ENCODE measurements at regions of chr10 and their contacts with region 1.

Region 1: GRCh38 chr10:105063796-105064195 is 422.7 kb downstream of the SORCS3 start:
- DNase-seq: no peak
- ATAC-seq: peak; percentile 83
- H3K4me3 ChIP-seq: no peak overlapping the region
- H3K27ac ChIP-seq: no peak overlapping the region
- H3K4me1 ChIP-seq: no peaks in the 10 kb centered on the region
- H3K27me3 ChIP-seq: no peaks in the 10 kb centered on the region
- CTCF ChIP-seq: peak; percentile 48 to 55 (median 51); a peak in 5 of 6 replicates
- EP300 ChIP-seq: no peak
- POLR2A ChIP-seq: no peak
- RAD21 ChIP-seq: peak; percentile 54

Region 2: GRCh38 chr10:105128111-105128510 is 64.3 kb after region 1 on chr10:
- CTCF ChIA-PET with region 1: no interaction called
- POLR2A ChIA-PET with region 1: no interaction called
- RAD21 ChIA-PET with region 1: no interaction called
- SMC1A ChIA-PET with region 1: no interaction called
- in situ Hi-C with region 1: no loop called
- intact Hi-C with region 1: no loop called
- DNase-seq: no peak
- ATAC-seq: no peak
- H3K4me3 ChIP-seq: no peak overlapping the region
- H3K27ac ChIP-seq: no peak overlapping the region
- H3K4me1 ChIP-seq: no peaks in the 10 kb centered on the region
- H3K27me3 ChIP-seq: no peaks in the 10 kb centered on the region; a peak in 1 of 4 replicates
- CTCF ChIP-seq: no peak
- EP300 ChIP-seq: no peak
- POLR2A ChIP-seq: no peak
- RAD21 ChIP-seq: no peak

Region 3: GRCh38 chr10:105161767-105162166 is 98.0 kb after region 1 on chr10:
- CTCF ChIA-PET with region 1: no interaction called
- POLR2A ChIA-PET with region 1: no interaction called
- RAD21 ChIA-PET with region 1: no interaction called
- SMC1A ChIA-PET with region 1: no interaction called
- in situ Hi-C with region 1: no loop called
- intact Hi-C with region 1: no loop called
- DNase-seq: no peak
- ATAC-seq: no peak
- H3K4me3 ChIP-seq: no peak overlapping the region
- H3K27ac ChIP-seq: no peak overlapping the region
- H3K4me1 ChIP-seq: no peaks in the 10 kb centered on the region
- H3K27me3 ChIP-seq: no peaks in the 10 kb centered on the region
- CTCF ChIP-seq: no peak
- EP300 ChIP-seq: no peak
- POLR2A ChIP-seq: no peak
- RAD21 ChIP-seq: no peak

Region 4: DNA sequence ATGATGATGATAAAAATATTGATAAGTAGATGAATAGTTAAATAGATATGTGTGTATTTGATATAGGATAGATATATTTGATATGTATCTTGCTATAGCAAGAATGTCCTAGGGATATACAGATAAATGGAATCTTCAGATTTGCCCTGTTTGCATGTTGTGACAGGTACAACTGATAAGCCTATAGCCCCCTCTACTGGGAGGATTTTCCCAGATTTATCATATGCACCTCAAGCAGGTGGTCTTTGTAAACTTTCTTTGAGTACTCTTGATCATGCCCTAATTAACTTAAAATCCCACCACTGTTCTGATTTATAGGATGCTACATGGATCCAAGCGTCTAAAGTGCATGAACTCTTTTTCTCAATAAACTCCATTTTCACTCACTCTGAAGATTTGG is 628.0 kb after region 1 on chr10:
- CTCF ChIA-PET with region 1: interaction called, 8 read pairs
- POLR2A ChIA-PET with region 1: no interaction called
- RAD21 ChIA-PET with region 1: interaction called, 6 read pairs
- SMC1A ChIA-PET with region 1: interaction called, 4 read pairs
- in situ Hi-C with region 1: no loop called
- intact Hi-C with region 1: loop called (anchors 5 kb)
- DNase-seq: no peak
- ATAC-seq: peak; percentile 52; the same call in 1 of the 3 replicates
- H3K4me3 ChIP-seq: no peak overlapping the region
- H3K27ac ChIP-seq: no peak overlapping the region
- H3K4me1 ChIP-seq: no peaks in the 10 kb centered on the region
- H3K27me3 ChIP-seq: no peaks in the 10 kb centered on the region
- CTCF ChIP-seq: peak; percentile 10 to 45 (median 16); a peak in 4 of 6 replicates
- EP300 ChIP-seq: no peak
- POLR2A ChIP-seq: no peak
- RAD21 ChIP-seq: peak; percentile 56

Region 5: GRCh38 chr10:106189292-106189691 is 1125.5 kb after region 1 on chr10:
- CTCF ChIA-PET with region 1: no interaction called
- POLR2A ChIA-PET with region 1: no interaction called
- RAD21 ChIA-PET with region 1: no interaction called
- SMC1A ChIA-PET with region 1: no interaction called
- in situ Hi-C with region 1: no loop called
- intact Hi-C with region 1: loop called (anchors 10 kb)
- DNase-seq: no peak
- ATAC-seq: peak; percentile 90
- H3K4me3 ChIP-seq: no peak overlapping the region
- H3K27ac ChIP-seq: no peak overlapping the region
- H3K4me1 ChIP-seq: no peaks in the 10 kb centered on the region
- H3K27me3 ChIP-seq: no peaks in the 10 kb centered on the region
- CTCF ChIP-seq: peak; percentile 52 to 56 (median 54)
- EP300 ChIP-seq: no peak
- POLR2A ChIP-seq: no peak
- RAD21 ChIP-seq: peak; percentile 48